WTC11 (cell line): ENCODE measurements at regions of chr15 and their contacts with region 1.

Region 1: DNA sequence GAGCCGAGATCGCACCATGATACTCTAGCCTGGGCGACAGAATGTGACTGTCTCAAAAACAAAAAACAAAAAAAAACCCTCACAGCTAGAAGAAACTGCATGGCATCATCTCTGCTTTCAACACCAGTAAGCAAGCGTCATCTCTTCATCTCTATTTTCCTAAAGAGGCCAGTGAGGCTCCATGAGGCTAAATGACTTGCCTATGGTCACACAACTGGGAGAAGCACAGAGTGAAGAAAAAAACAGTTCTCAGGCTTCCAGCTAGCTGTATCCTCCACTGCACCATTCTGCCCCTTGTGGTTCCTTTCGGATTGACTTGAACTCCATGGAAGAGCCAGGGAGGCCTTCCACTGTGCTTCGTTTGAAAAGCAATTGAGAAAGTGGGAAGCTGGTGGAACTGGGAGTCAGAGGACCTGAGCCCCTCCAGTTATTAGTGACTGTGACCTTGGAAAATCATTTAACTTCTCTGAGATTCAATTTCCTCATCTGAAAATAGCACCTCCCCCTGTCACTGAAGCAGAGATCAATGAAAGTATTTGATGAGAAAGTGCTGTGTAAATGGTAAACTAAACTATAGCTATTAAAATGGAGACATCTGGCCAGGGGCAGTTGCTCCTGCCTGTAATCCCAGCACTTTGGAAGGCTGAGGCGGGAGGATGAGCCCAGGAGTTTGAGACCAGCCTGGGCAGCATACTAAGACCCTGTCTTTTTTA is 32.1 kb upstream of the DENND4A start:
- DNase-seq: peak; percentile 67
- ATAC-seq: peak; percentile 98
- H3K4me3 Mint-ChIP-seq: no peak overlapping the region
- H3K27ac Mint-ChIP-seq: peak overlapping the region; percentile 92; the same call in 1 of the 2 replicates
- H3K4me1 Mint-ChIP-seq: peaks cover 34% of the 10 kb centered on the region
- H3K27me3 Mint-ChIP-seq: no peaks in the 10 kb centered on the region
- CTCF ChIP-seq: no peak

Region 2: GRCh38 chr15:65610871-65611718 is 213.1 kb before region 1 on chr15 and contains the start of gene INTS14:
- CTCF ChIA-PET with region 1: interaction called, 10 read pairs
- POLR2A ChIA-PET with region 1: no interaction called
- DNase-seq: peak; percentile 99
- ATAC-seq: peak; percentile 99
- H3K4me3 Mint-ChIP-seq: peak within 1 kb of the TSS; percentile 92
- H3K27ac Mint-ChIP-seq: peak within 1 kb of the TSS; percentile 99
- H3K4me1 Mint-ChIP-seq: peaks cover 21% of the 10 kb centered on the region
- H3K27me3 Mint-ChIP-seq: no peaks in the 10 kb centered on the region
- CTCF ChIP-seq: peak; percentile 67
- total RNA-seq, gene INTS14: 28.3 to 31.9 TPM (median 30.7 TPM) in 3 replicates

Region 3: GRCh38 chr15:65792130-65792987 is 31.8 kb before region 1 on chr15 and contains the start of gene DENND4A:
- CTCF ChIA-PET with region 1: interaction called, 13 read pairs
- POLR2A ChIA-PET with region 1: no interaction called
- DNase-seq: peak; percentile 97
- ATAC-seq: peak; percentile 96
- H3K4me3 Mint-ChIP-seq: peak within 1 kb of the TSS; percentile 88
- H3K27ac Mint-ChIP-seq: peak within 1 kb of the TSS; percentile 98
- H3K4me1 Mint-ChIP-seq: peaks cover 31% of the 10 kb centered on the region
- H3K27me3 Mint-ChIP-seq: no peaks in the 10 kb centered on the region
- CTCF ChIP-seq: no peak
- total RNA-seq, gene DENND4A: 4.9 to 5.7 TPM (median 5.5 TPM) in 3 replicates

Region 4: DNA sequence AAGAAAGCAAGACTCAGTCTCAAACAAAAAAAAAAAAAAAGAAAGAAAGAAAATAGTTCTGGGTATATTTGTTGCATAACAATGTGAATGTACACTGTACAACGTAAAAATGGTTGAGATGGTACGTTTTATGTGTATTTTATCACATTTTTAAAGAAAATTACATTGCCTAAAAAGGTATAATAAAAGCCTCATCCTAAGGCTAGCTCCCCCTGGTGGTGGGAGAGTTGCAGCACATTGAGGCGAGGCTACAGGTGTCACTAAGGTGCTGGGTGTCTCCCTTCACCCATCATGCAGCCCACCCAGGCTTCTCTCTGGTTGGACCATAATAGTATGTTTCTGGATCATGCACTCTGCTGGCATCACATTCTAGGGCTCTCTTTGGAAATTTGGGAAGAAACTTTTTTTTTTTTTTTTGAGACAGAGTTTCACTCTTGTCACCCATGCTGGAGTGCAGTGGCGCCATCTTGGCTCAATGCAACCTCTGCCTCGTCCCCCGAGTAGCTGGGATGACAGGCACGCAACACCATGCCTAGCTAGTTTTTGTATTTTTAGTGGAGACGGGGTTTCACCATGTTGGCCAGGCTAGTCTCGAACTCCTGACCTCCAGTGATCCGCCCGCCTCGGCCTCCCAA is 32.8 kb after region 1 on chr15:
- CTCF ChIA-PET with region 1: interaction called, 23 read pairs
- POLR2A ChIA-PET with region 1: no interaction called
- DNase-seq: peak; percentile 83
- ATAC-seq: peak; percentile 76
- H3K4me3 Mint-ChIP-seq: no peak overlapping the region
- H3K27ac Mint-ChIP-seq: no peak overlapping the region
- H3K4me1 Mint-ChIP-seq: peaks cover 16% of the 10 kb centered on the region
- H3K27me3 Mint-ChIP-seq: no peaks in the 10 kb centered on the region; the same call in 1 of the 2 replicates
- CTCF ChIP-seq: peak; percentile 78

Region 5: GRCh38 chr15:65862682-65863081 is 38.5 kb after region 1 on chr15:
- CTCF ChIA-PET with region 1: interaction called, 23 read pairs
- POLR2A ChIA-PET with region 1: no interaction called
- DNase-seq: peak; percentile 77
- ATAC-seq: peak; percentile 99
- H3K4me3 Mint-ChIP-seq: no peak overlapping the region
- H3K27ac Mint-ChIP-seq: no peak overlapping the region
- H3K4me1 Mint-ChIP-seq: peaks cover 23% of the 10 kb centered on the region
- H3K27me3 Mint-ChIP-seq: no peaks in the 10 kb centered on the region
- CTCF ChIP-seq: 0 out of 2 replicates have a peak, but pooled peaks have one; percentile 16

Region 6: GRCh38 chr15:65869127-65869953 is 45.2 kb after region 1 on chr15 and contains the start of gene RAB11A:
- CTCF ChIA-PET with region 1: interaction called, 10 read pairs
- POLR2A ChIA-PET with region 1: interaction called, 6 read pairs
- DNase-seq: peak; percentile 95
- ATAC-seq: peak; percentile 91
- H3K4me3 Mint-ChIP-seq: peak within 1 kb of the TSS; percentile 99
- H3K27ac Mint-ChIP-seq: peak within 1 kb of the TSS; percentile 99
- H3K4me1 Mint-ChIP-seq: peaks cover 16% of the 10 kb centered on the region
- H3K27me3 Mint-ChIP-seq: peaks cover 3% of the 10 kb centered on the region; the same call in 1 of the 2 replicates
- CTCF ChIP-seq: no peak
- total RNA-seq, gene RAB11A: 223 to 245 TPM (median 224 TPM) in 3 replicates

Region 7: DNA sequence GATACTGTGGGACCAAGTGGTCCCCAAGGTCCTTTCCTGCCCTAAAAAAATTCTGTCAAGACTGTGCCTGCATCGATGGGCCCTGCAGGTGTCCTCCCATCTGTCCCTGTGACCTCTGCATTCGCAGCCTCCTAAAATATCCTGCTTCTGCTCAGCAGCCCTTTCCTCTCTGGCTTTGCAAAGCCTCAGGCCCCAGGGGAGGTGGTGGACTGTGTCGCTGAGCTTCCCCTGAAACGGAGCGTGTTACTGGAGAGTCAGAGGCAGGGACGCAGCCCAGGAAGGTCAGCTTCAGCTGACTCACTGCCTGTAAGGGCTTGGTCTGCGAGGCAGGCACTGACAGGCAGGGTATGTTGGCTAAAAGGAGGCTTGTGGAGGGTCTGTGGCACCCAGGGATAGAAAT is 155.1 kb after region 1 on chr15:
- CTCF ChIA-PET with region 1: no interaction called
- POLR2A ChIA-PET with region 1: no interaction called
- DNase-seq: no peak
- ATAC-seq: no peak
- H3K4me3 Mint-ChIP-seq: no peak overlapping the region
- H3K27ac Mint-ChIP-seq: no peak overlapping the region
- H3K4me1 Mint-ChIP-seq: peaks cover 30% of the 10 kb centered on the region
- H3K27me3 Mint-ChIP-seq: 0 out of 2 replicates have a peak, but pooled peaks cover 2% of the 10 kb centered on the region
- CTCF ChIP-seq: no peak